Heart right ventricle (tissue), 16 donors: ENCODE measurements at regions of chr15 and their contacts with region 1.

Region 1: DNA sequence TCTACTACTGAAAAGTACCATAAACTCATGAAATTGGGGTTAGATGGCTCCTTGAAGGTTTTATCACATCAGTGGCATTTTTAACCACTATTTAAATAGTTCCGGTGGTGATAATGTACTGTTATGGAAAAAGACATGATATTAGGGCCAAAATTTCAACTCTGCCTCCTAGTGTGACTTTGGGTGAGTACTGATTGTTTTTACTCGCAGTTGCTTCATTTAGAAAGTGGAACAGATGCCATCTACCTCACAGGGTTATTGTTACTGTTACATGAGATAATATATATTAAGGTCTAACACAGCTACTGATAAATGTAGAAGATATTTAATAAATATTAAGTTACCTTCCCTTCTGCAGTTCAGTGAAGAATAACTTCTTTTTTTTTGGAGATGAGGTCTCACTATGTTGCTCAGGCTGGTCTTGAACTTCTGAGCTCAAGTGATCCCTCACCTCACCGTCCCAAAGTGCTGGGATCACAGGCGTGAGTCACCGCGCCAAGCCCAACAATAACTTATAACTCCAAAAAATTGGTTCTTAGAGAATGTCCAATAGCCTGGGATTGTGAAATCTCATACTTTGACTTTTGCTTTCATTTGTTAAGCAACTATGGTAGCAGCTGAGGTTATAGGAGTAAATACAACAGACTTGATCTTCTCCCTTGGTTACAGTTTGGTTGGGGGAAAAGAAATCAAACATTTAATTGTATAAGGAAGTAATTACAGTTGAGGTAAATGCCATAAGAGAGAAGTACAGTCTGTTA is 48.3 kb downstream of the MEF2A start:
- DNase-seq: no peak
- ATAC-seq: peak in 3 of 8 donors; percentile 36 to 57 (median 37)
- H3K4me3 ChIP-seq: no peak overlapping the region
- H3K27ac ChIP-seq: peak overlapping the region in 5 of 10 donors; percentile 1 to 81 (median 34)
- H3K4me1 ChIP-seq: peaks cover 13 to 93% (median 78%) of the 10 kb centered on the region in 9 donors
- H3K27me3 ChIP-seq: no peaks in the 10 kb centered on the region
- CTCF ChIP-seq: no peak

Region 2: DNA sequence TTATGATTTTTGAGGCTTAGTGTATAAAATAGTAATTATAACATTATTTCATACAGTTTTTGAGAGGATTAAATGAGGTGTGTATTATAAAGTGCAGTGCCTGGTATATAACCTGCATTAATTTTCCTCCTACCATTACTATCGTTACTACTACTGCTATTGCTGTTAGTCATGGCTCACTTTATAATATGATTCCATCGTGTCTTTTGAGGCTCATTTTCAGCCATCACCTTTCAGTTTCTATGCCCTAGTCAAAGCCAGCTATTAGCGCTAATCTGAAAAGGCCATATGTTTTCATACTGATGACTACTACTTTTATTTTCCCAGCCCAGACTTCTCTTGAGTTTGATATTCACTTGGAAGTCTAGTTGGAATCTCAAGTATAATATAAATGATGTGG is 42.8 kb before region 1 on chr15:
- intact Hi-C with region 1: loop called in 2 of 10 experiments (anchors 5 kb)
- DNase-seq: no peak
- ATAC-seq: no peak
- H3K4me3 ChIP-seq: no peak overlapping the region
- H3K27ac ChIP-seq: peak overlapping the region in 1 of 10 donors; percentile 32
- H3K4me1 ChIP-seq: peaks cover 0 to 87% (median 61%) of the 10 kb centered on the region in 9 donors
- H3K27me3 ChIP-seq: no peaks in the 10 kb centered on the region
- CTCF ChIP-seq: no peak

Region 3: DNA sequence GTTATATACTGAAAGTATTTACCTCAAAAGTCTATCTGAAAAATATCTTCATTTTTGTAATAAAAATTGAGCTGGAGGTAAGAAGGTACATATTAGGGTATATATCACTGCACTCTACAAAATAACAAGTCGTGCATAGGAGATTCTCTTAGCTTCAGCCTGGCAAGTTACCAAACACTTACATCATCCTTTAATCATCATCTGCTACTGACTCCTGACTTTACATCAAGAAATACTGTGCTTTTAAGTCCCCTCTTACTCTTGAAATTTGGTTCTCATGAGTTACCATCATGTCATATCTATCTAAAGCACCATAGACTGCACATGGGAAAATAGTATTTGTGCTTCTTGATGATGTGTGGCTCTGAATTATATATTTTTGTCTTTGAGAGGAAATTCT is 68.4 kb after region 1 on chr15:
- intact Hi-C with region 1: no loop called
- DNase-seq: no peak
- ATAC-seq: peak in 6 of 8 donors; percentile 37 to 56 (median 54)
- H3K4me3 ChIP-seq: no peak overlapping the region
- H3K27ac ChIP-seq: peak overlapping the region in 9 of 10 donors; percentile 33 to 84 (median 68)
- H3K4me1 ChIP-seq: peaks cover 3 to 41% (median 22%) of the 10 kb centered on the region in 9 donors
- H3K27me3 ChIP-seq: no peaks in the 10 kb centered on the region
- CTCF ChIP-seq: no peak